Transverse colon (tissue), 4 donors: ENCODE measurements at regions of chr17 and their contacts with region 1.

Region 1: GRCh38 chr17:62614142-62614541 is 13.3 kb upstream of the MRC2 start:
- DNase-seq: no peak
- H3K4me3 ChIP-seq: no peak overlapping the region
- H3K27ac ChIP-seq: no peak overlapping the region
- H3K4me1 ChIP-seq: no peaks in the 10 kb centered on the region
- H3K27me3 ChIP-seq: no peaks in the 10 kb centered on the region
- CTCF ChIP-seq: no peak
- EP300 ChIP-seq: no peak
- POLR2A ChIP-seq: no peak

Region 2: DNA sequence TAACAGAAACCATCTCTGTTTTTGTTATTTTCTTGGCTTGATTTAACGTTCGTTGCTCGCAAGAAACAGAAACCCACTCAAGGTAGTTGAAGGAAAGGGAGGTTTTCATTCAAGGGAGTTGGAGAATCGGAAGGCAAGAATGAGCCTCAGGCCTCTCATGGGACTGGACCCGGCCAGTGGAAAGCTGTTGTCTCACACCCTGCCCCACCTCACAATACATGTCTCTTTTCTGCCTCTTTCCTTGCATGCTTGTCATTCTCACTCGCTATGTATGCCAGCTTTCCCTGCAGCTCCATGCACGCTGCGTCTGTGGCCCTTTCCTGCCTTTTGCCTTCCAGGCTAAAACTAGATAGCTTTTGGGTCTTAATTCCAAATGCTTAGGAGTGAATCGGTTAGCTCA is 954.4 kb after region 1 on chr17:
- in situ Hi-C with region 1: no loop called
- intact Hi-C with region 1: loop called (anchors 5 kb)
- DNase-seq: no peak
- H3K4me3 ChIP-seq: no peak overlapping the region
- H3K27ac ChIP-seq: no peak overlapping the region
- H3K4me1 ChIP-seq: peaks cover 0 to 1% (median 0%) of the 10 kb centered on the region in 4 donors
- H3K27me3 ChIP-seq: no peaks in the 10 kb centered on the region
- CTCF ChIP-seq: no peak
- EP300 ChIP-seq: no peak
- POLR2A ChIP-seq: no peak